OCI-LY7 (cell line): ENCODE measurements at regions of chr1 and their contacts with region 1.

Region 1: DNA sequence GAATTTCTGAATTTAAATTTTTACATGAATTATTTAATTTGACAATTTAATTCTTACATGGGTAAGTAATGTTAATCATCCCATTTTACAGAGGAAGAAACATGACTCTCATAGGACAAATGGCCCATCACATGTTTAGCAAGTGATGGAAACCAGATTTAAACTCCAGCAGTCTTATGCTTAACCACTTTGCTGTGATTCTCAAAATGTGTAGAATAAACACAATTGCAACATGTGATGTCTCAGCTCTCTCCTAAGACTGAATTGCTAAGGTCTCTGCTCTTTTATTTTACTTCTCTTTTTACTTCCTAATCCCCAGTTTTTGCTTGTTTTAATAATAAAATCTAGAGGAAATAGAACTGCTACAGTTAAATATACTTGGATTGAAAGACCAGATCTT is 42.8 kb downstream of the HS2ST1 start:
- DNase-seq: no peak
- H3K4me3 ChIP-seq: no peak overlapping the region
- H3K27ac ChIP-seq: no peak overlapping the region
- H3K4me1 ChIP-seq: peaks cover 23% of the 10 kb centered on the region
- CTCF ChIP-seq: no peak

Region 2: GRCh38 chr1:86942042-86942441 is 15.2 kb before region 1 on chr1:
- CTCF ChIA-PET with region 1: no interaction called
- POLR2A ChIA-PET with region 1: interaction called, 11 read pairs
- intact Hi-C with region 1: no loop called
- DNase-seq: no peak
- H3K4me3 ChIP-seq: no peak overlapping the region
- H3K27ac ChIP-seq: no peak overlapping the region
- H3K4me1 ChIP-seq: peaks cover 14% of the 10 kb centered on the region
- CTCF ChIP-seq: no peak